ENCODE measurements at regions of chr15 and their contacts with region 1.

Region 1: DNA sequence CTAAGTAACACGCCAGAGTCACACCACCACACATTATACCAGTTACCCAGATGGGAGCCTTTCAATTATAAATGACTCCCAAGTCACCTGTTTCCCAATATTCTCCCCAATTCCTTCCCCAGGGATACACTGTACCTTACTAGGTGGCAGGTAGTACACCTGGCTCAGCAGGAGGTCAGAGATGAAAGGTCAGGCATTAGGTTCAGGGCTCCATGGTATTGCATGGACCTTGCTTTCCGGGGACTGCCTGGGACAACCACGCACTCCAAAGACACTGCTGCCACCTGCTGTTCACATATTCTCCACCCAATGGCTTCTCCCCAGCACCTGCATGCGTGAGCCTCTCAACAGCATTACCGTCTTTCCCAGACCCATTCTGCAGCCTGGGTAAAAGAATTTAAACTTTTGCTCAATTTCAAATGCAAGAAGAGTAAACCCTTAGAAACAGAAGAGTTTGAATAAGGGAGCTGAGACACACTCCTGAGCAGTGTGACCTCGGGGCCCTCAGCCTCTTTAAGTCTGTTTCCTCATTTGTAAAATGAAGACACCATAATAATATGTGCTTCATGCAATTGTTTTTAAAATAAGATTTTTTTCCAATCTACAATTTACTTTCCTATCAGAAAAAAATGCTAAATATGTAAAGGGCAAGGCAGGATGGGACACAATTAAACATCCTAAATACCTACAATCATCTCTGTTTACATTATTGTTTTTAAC is 28.0 kb upstream of the LACTB start:
- H3K4me3 Mint-ChIP-seq: no peak overlapping the region
- H3K27ac Mint-ChIP-seq: no peak overlapping the region
- H3K4me1 Mint-ChIP-seq: peaks cover 12% of the 10 kb centered on the region
- H3K27me3 Mint-ChIP-seq: no peaks in the 10 kb centered on the region

Region 2: GRCh38 chr15:62782039-62782791 is 311.4 kb before region 1 on chr15:
- intact Hi-C with region 1: loop called (anchors 1 kb)
- H3K4me3 Mint-ChIP-seq: no peak overlapping the region
- H3K27ac Mint-ChIP-seq: no peak overlapping the region
- H3K4me1 Mint-ChIP-seq: peaks cover 30% of the 10 kb centered on the region
- H3K27me3 Mint-ChIP-seq: peaks cover 8% of the 10 kb centered on the region

Region 3: GRCh38 chr15:62847900-62848489 is 245.7 kb before region 1 on chr15:
- intact Hi-C with region 1: loop called (anchors 1 kb)
- H3K4me3 Mint-ChIP-seq: no peak overlapping the region
- H3K27ac Mint-ChIP-seq: no peak overlapping the region
- H3K4me1 Mint-ChIP-seq: peaks cover 14% of the 10 kb centered on the region
- H3K27me3 Mint-ChIP-seq: peaks cover 9% of the 10 kb centered on the region

Region 4: DNA sequence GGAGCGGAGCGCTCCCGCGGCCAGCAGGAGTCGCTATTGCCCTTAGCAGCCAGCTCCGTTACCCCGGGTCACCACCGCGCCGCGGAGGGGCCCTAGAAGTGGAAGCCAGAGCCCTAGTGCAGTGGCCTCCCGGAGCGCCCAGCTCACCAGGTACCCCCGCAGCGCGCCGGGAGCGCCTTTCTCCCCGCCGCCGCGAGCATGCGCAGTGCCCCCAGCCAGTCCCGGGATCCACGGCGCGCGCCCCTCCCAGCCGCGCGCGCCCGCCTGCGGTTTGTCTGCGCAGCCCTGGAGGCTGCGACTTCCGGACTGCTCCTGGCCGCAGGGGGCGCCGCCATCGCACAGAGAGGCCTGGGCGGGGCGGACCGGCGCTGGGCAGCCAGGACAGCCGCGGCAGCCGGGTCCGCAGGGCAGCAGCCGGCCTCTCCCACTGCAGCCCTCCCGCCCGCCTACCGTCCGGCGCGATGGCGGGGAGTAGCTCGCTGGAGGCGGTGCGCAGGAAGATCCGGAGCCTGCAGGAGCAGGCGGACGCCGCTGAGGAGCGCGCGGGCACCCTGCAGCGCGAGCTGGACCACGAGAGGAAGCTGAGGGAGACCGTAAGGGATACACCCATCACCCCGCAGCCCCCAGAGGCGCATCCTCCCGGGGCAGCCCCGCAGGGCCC is 45.4 kb before region 1 on chr15:
- intact Hi-C with region 1: loop called (anchors 2 kb)
- H3K4me3 Mint-ChIP-seq: peak overlapping the region; percentile 91
- H3K27ac Mint-ChIP-seq: peak overlapping the region; percentile 85
- H3K4me1 Mint-ChIP-seq: peaks cover 50% of the 10 kb centered on the region
- H3K27me3 Mint-ChIP-seq: peaks cover 57% of the 10 kb centered on the region

Region 5: GRCh38 chr15:63135804-63136203 is 42.2 kb after region 1 on chr15:
- intact Hi-C with region 1: no loop called
- H3K4me3 Mint-ChIP-seq: peak overlapping the region; percentile 44
- H3K27ac Mint-ChIP-seq: peak overlapping the region; percentile 89
- H3K4me1 Mint-ChIP-seq: peaks cover 38% of the 10 kb centered on the region
- H3K27me3 Mint-ChIP-seq: no peaks in the 10 kb centered on the region